Endothelial cell of umbilical vein (primary cell): ENCODE measurements at regions of chr15 and their contacts with region 1.

Region 1: GRCh38 chr15:50765195-50765973 is at the start of gene SPPL2A:
- DNase-seq: peak; percentile 77
- H3K4me3 ChIP-seq: peak within 1 kb of the TSS; percentile 77 to 93 (median 84)
- H3K27ac ChIP-seq: peak within 1 kb of the TSS; percentile 71
- H3K4me1 ChIP-seq: peaks cover 12% of the 10 kb centered on the region
- H3K27me3 ChIP-seq: no peaks in the 10 kb centered on the region
- CTCF ChIP-seq: no peak
- POLR2A ChIP-seq: peak; percentile 95
- total RNA-seq, gene SPPL2A: 80.1 and 88.7 TPM in 2 replicates

Region 2: GRCh38 chr15:50424066-50424890 is 341.1 kb before region 1 on chr15 and contains the start of gene USP8:
- CTCF ChIA-PET with region 1: no interaction called
- POLR2A ChIA-PET with region 1: no interaction called
- dilution Hi-C with region 1: no loop called
- intact Hi-C with region 1: loop called (anchors 10 kb)
- DNase-seq: peak; percentile 96
- H3K4me3 ChIP-seq: peak within 1 kb of the TSS; percentile 41 to 96 (median 86)
- H3K27ac ChIP-seq: peak within 1 kb of the TSS; percentile 58
- H3K4me1 ChIP-seq: peaks cover 8% of the 10 kb centered on the region
- H3K27me3 ChIP-seq: no peaks in the 10 kb centered on the region
- CTCF ChIP-seq: no peak
- POLR2A ChIP-seq: peak; percentile 96
- total RNA-seq, gene USP8: 44.8 and 47.0 TPM in 2 replicates